ENCODE measurements at regions of chr4 and their contacts with region 1.

Region 1: DNA sequence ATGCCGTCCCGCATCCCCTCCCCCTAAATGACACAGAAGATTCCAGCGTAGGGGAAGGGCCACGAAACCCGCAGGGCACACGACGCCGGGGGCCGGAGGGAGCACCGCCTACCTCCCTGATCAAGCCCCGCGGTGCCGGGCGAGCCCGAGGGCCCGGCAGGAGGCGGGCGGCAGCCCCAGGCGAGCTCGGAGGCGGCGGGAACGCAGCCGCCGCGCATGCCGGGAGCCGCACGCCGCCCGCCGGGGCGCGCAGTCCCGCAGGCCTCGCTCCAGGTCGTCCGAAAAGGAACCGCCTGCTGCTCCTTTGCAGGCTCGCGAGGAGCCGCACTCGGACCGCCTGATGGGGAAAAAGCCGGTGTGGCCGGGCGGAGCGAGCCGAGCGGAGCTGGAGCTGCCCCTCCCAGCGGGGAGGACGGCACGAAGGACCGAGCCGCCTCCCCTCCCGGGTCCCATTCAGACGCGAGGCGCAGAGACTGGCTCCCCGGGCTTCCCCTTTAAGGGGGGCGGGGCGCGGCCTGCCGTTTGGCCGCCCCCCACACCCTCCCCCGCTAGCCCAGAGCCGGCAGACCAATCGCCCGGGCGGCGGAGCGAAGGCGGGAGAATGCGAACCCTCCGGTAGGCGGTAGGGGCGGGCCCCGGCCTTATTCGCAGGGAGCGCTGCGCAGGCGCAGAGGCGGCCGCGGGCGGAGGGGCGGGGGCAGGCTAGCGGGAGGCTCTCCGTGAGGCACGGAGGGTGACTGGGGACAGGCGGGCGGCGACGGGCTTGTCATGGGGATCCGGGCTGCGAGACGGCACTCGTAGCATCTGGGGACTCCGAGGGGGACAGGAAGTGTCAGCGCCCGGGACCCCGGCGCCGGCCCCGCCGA is 561 bp upstream of the ING2 start:
- DNase-seq: peak; percentile 98 to 100 (median 99)
- H3K4me3 ChIP-seq: peak overlapping the region; percentile 50 to 73
- H3K4me3 Mint-ChIP-seq: peak overlapping the region; percentile 82 to 98 (median 94)
- H3K27ac ChIP-seq: peak overlapping the region; percentile 90
- H3K27ac Mint-ChIP-seq: peak overlapping the region; percentile 89 to 98 (median 95)
- H3K4me1 ChIP-seq: peaks cover 19% of the 10 kb centered on the region
- H3K4me1 Mint-ChIP-seq: peaks cover 9 to 27% (median 23%) of the 10 kb centered on the region in 4 donors
- H3K27me3 ChIP-seq: no peaks in the 10 kb centered on the region
- H3K27me3 Mint-ChIP-seq: no peaks in the 10 kb centered on the region

Region 2: GRCh38 chr4:182492422-182492821 is 1011.9 kb before region 1 on chr4:
- CTCF ChIA-PET with region 1: no interaction called
- POLR2A ChIA-PET with region 1: no interaction called
- intact Hi-C with region 1: no loop called
- DNase-seq: no peak
- H3K4me3 ChIP-seq: no peak overlapping the region
- H3K4me3 Mint-ChIP-seq: peak overlapping the region in 1 of 8 donors; percentile 6
- H3K27ac ChIP-seq: no peak overlapping the region
- H3K27ac Mint-ChIP-seq: no peak overlapping the region
- H3K4me1 ChIP-seq: no peaks in the 10 kb centered on the region
- H3K4me1 Mint-ChIP-seq: peaks cover 0 to 2% (median under 1%) of the 10 kb centered on the region in 4 donors
- H3K27me3 ChIP-seq: no peaks in the 10 kb centered on the region
- H3K27me3 Mint-ChIP-seq: peaks cover 2 to 3% of the 10 kb centered on the region in 2 donors

Region 3: DNA sequence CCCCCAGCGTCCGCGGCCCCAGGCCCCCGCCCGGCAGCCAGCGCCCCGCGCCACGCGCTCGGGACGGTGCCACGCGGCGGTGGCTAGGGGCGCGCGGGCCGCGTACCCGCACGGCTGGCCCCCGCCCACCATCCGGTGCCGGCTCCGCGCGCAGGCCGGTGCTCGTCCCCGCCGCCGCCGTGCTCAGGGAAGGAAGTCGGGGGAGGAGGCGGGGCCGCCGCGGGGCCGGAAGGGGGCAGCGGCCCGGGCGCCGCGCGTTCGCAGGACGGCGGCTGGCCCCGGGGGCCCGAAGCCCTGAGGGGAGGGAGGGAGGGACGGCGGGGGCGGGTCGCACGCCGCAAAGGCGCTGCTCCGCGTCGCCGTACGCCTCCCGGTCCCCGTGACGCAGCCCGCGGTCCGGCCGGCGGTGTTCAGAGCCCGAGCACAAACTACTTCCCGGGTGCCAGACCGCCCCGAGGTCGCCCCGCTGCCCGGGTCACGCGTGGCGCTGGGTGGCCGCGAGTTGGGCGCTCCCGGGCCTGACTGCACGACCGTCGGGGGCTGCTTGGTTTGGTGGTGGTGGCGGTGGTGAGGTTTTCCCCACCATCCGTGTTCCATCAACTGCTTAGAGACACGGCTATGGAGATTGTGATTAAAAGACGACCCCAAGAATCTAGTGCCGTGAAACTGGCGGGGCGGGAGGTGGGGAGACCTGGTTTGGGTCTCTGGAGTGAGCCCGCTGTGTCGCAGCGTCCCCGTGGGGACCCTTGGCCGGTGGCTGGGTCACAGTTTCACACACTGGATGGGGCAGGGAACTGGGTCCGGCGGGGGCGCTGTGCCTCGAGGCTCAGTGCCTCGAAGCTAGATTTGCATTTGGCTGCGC is 586.9 kb before region 1 on chr4 and contains the start of gene DCTD:
- CTCF ChIA-PET with region 1: interaction called, 3 read pairs
- POLR2A ChIA-PET with region 1: interaction called, 8 read pairs
- intact Hi-C with region 1: loop called (anchors 1 kb)
- DNase-seq: peak; percentile 78 to 84 (median 81)
- H3K4me3 ChIP-seq: peak within 1 kb of the TSS; percentile 55 to 81
- H3K4me3 Mint-ChIP-seq: peak within 1 kb of the TSS; percentile 83 to 95 (median 92)
- H3K27ac ChIP-seq: peak within 1 kb of the TSS; percentile 94
- H3K27ac Mint-ChIP-seq: peak within 1 kb of the TSS; percentile 85 to 98 (median 95)
- H3K4me1 ChIP-seq: peaks cover 30% of the 10 kb centered on the region
- H3K4me1 Mint-ChIP-seq: peaks cover 27 to 64% (median 39%) of the 10 kb centered on the region in 4 donors
- H3K27me3 ChIP-seq: no peaks in the 10 kb centered on the region
- H3K27me3 Mint-ChIP-seq: no peaks in the 10 kb centered on the region
- total RNA-seq, gene DCTD: 66.6 to 67.7 TPM

Region 4: DNA sequence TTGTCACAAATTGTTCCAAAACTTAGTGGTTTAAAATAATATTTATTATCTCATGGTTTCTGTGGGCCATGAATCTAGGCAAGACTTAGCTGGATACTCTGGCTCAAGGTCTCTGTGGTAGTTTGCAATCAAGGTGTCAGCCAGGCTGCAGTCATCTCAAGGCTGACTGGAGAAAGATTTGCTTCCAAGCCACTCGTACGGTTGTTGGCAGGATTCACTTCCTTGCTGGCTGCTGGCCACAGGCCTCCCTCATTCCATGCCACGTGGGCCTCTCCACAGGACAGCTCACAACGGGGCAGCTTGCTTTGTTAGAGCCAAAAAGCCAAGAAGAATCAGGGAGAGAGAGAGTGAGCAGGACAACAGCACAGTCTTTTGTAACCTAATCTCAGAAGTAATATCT is 303.8 kb before region 1 on chr4:
- CTCF ChIA-PET with region 1: no interaction called
- POLR2A ChIA-PET with region 1: no interaction called
- intact Hi-C with region 1: no loop called
- DNase-seq: no peak
- H3K4me3 ChIP-seq: no peak overlapping the region
- H3K4me3 Mint-ChIP-seq: no peak overlapping the region
- H3K27ac ChIP-seq: no peak overlapping the region
- H3K27ac Mint-ChIP-seq: no peak overlapping the region
- H3K4me1 ChIP-seq: no peaks in the 10 kb centered on the region
- H3K4me1 Mint-ChIP-seq: peaks cover 0 to 1% (median 0%) of the 10 kb centered on the region in 4 donors
- H3K27me3 ChIP-seq: no peaks in the 10 kb centered on the region
- H3K27me3 Mint-ChIP-seq: peaks cover 0 to 1% of the 10 kb centered on the region in 2 donors

Region 5: GRCh38 chr4:183444214-183445066 is 59.9 kb before region 1 on chr4 and contains the start of gene CDKN2AIP:
- CTCF ChIA-PET with region 1: interaction called, 15 read pairs
- POLR2A ChIA-PET with region 1: interaction called, 130 read pairs
- intact Hi-C with region 1: loop called (anchors 1 kb)
- DNase-seq: peak; percentile 93 to 96 (median 96)
- H3K4me3 ChIP-seq: peak within 1 kb of the TSS; percentile 77 to 85
- H3K4me3 Mint-ChIP-seq: peak within 1 kb of the TSS; percentile 92 to 99 (median 98)
- H3K27ac ChIP-seq: peak within 1 kb of the TSS; percentile 96
- H3K27ac Mint-ChIP-seq: peak within 1 kb of the TSS; percentile 96 to 99 (median 98)
- H3K4me1 ChIP-seq: peaks cover 52% of the 10 kb centered on the region
- H3K4me1 Mint-ChIP-seq: peaks cover 32 to 63% (median 43%) of the 10 kb centered on the region in 4 donors
- H3K27me3 ChIP-seq: no peaks in the 10 kb centered on the region
- H3K27me3 Mint-ChIP-seq: no peaks in the 10 kb centered on the region
- total RNA-seq, gene CDKN2AIP: 48.3 to 51.1 TPM

Region 6: GRCh38 chr4:183493246-183493645 is 11.1 kb before region 1 on chr4:
- CTCF ChIA-PET with region 1: no interaction called
- POLR2A ChIA-PET with region 1: no interaction called
- intact Hi-C with region 1: no loop called
- DNase-seq: no peak
- H3K4me3 ChIP-seq: no peak overlapping the region
- H3K4me3 Mint-ChIP-seq: no peak overlapping the region
- H3K27ac ChIP-seq: no peak overlapping the region
- H3K27ac Mint-ChIP-seq: no peak overlapping the region
- H3K4me1 ChIP-seq: no peaks in the 10 kb centered on the region
- H3K4me1 Mint-ChIP-seq: no peaks in the 10 kb centered on the region
- H3K27me3 ChIP-seq: no peaks in the 10 kb centered on the region
- H3K27me3 Mint-ChIP-seq: no peaks in the 10 kb centered on the region

Region 7: GRCh38 chr4:183659029-183659871 is 155.0 kb after region 1 on chr4 and contains the starts of genes RWDD4 and TRAPPC11:
- CTCF ChIA-PET with region 1: interaction called, 5 read pairs
- POLR2A ChIA-PET with region 1: interaction called, 20 read pairs
- intact Hi-C with region 1: loop called (anchors 1 kb)
- DNase-seq: peak; percentile 95 to 98 (median 96)
- H3K4me3 ChIP-seq: peak within 1 kb of the TSS; percentile 89 to 91
- H3K4me3 Mint-ChIP-seq: peak within 1 kb of the TSS; percentile 91 to 98 (median 94)
- H3K27ac ChIP-seq: peak within 1 kb of the TSS; percentile 93
- H3K27ac Mint-ChIP-seq: peak within 1 kb of the TSS; percentile 75 to 99 (median 97)
- H3K4me1 ChIP-seq: peaks cover 37% of the 10 kb centered on the region
- H3K4me1 Mint-ChIP-seq: peaks cover 25 to 54% (median 41%) of the 10 kb centered on the region in 4 donors
- H3K27me3 ChIP-seq: no peaks in the 10 kb centered on the region
- H3K27me3 Mint-ChIP-seq: no peaks in the 10 kb centered on the region
- total RNA-seq, gene RWDD4: 12.0 to 13.8 TPM
- total RNA-seq, gene TRAPPC11: 42.2 to 51.0 TPM

Region 8: GRCh38 chr4:185203486-185204237 is 1699.4 kb after region 1 on chr4 and contains the start of gene CFAP97:
- CTCF ChIA-PET with region 1: no interaction called
- POLR2A ChIA-PET with region 1: no interaction called
- intact Hi-C with region 1: loop called (anchors 5 kb)
- DNase-seq: peak; percentile 88 to 90 (median 90)
- H3K4me3 ChIP-seq: peak within 1 kb of the TSS; percentile 47 to 83
- H3K4me3 Mint-ChIP-seq: peak within 1 kb of the TSS; percentile 91 to 99 (median 96)
- H3K27ac ChIP-seq: peak within 1 kb of the TSS; percentile 82
- H3K27ac Mint-ChIP-seq: peak within 1 kb of the TSS; percentile 98 to 99 (median 99)
- H3K4me1 ChIP-seq: peaks cover 48% of the 10 kb centered on the region
- H3K4me1 Mint-ChIP-seq: peaks cover 31 to 66% (median 48%) of the 10 kb centered on the region in 4 donors
- H3K27me3 ChIP-seq: no peaks in the 10 kb centered on the region
- H3K27me3 Mint-ChIP-seq: no peaks in the 10 kb centered on the region
- total RNA-seq, gene CFAP97: 41.6 to 41.9 TPM

Measured in CD4-positive, alpha-beta memory T cell (primary cell).